Activated CD8-positive, alpha-beta T cell treated with anti-CD3 and anti-CD28 coated beads, Interleukin-2, amount 10 ng/mL, durations not matched to agents 7 days and 5 days (primary cell): ENCODE measurements at regions of chr10 and their contacts with region 1.

Region 1: GRCh38 chr10:101095542-101096213 is 33.9 kb downstream of the KAZALD1 start:
- DNase-seq: peak; percentile 79
- ATAC-seq: peak; percentile 90
- H3K4me3 Mint-ChIP-seq: no peak overlapping the region
- H3K27ac Mint-ChIP-seq: no peak overlapping the region
- H3K4me1 Mint-ChIP-seq: no peaks in the 10 kb centered on the region
- H3K27me3 Mint-ChIP-seq: peaks cover 34% of the 10 kb centered on the region

Region 2: GRCh38 chr10:101080933-101081931 is 14.4 kb before region 1 on chr10:
- CTCF ChIA-PET with region 1: interaction called, 44 read pairs
- POLR2A ChIA-PET with region 1: no interaction called
- DNase-seq: no peak
- ATAC-seq: no peak
- H3K4me3 Mint-ChIP-seq: no peak overlapping the region
- H3K27ac Mint-ChIP-seq: no peak overlapping the region
- H3K4me1 Mint-ChIP-seq: no peaks in the 10 kb centered on the region
- H3K27me3 Mint-ChIP-seq: peaks cover 30% of the 10 kb centered on the region

Region 3: GRCh38 chr10:101120884-101121653 is 25.4 kb after region 1 on chr10:
- CTCF ChIA-PET with region 1: interaction called, 16 read pairs
- POLR2A ChIA-PET with region 1: no interaction called
- DNase-seq: peak; percentile 51
- ATAC-seq: peak; percentile 80
- H3K4me3 Mint-ChIP-seq: peak overlapping the region; percentile 80
- H3K27ac Mint-ChIP-seq: peak overlapping the region; percentile 78
- H3K4me1 Mint-ChIP-seq: peaks cover 27% of the 10 kb centered on the region
- H3K27me3 Mint-ChIP-seq: peaks cover 61% of the 10 kb centered on the region